Left cardiac atrium (tissue), 4 donors: ENCODE measurements at regions of chr1 and their contacts with region 1.

Region 1: DNA sequence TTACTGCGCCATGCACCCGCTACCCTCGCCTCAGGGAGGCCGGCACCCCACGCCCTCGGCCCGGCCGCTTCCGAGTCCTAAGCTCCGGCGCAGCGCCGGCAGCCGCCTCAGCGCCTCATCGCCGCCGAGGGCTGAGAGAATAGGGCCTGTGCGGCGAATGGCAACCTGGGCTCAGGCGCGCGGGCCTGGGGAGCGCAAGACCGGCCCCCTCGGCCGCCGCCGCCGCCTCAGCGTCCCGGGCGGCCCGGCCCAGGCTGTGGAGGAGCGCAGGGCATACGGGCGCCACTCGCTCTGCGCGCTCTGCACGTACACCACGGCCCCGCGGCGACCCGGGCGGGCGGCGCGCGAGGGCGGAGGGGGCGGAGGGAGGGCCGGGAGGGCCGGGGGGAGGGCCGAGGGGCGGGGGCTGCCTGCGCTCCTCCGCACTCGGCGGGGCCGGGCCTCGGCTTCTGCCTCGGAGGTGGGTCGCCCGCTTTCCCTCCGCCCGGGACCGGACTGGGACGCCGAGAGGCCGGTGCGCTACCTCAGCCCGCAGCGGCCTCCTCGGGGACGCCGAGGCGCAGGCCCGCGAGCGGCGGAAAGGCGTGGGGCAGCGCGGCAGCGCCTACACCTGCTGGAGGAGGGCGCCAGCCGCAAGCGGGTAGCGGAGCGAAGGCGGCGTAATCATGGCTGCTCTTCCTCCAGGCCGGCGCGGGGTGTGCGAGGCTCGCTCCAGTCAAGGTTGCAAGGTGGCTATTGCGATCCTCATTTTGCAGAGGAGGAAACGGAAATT is at the start of gene EGLN1:
- DNase-seq: peak; percentile 90
- ATAC-seq: peak; percentile 94 to 95
- total RNA-seq, gene EGLN1: 53.6 to 85.0 TPM

Region 2: GRCh38 chr1:231369282-231369681 is 52.9 kb before region 1 on chr1:
- intact Hi-C with region 1: loop called in 1 of 2 experiments (anchors 10 kb)
- DNase-seq: no peak
- ATAC-seq: no peak

Region 3: DNA sequence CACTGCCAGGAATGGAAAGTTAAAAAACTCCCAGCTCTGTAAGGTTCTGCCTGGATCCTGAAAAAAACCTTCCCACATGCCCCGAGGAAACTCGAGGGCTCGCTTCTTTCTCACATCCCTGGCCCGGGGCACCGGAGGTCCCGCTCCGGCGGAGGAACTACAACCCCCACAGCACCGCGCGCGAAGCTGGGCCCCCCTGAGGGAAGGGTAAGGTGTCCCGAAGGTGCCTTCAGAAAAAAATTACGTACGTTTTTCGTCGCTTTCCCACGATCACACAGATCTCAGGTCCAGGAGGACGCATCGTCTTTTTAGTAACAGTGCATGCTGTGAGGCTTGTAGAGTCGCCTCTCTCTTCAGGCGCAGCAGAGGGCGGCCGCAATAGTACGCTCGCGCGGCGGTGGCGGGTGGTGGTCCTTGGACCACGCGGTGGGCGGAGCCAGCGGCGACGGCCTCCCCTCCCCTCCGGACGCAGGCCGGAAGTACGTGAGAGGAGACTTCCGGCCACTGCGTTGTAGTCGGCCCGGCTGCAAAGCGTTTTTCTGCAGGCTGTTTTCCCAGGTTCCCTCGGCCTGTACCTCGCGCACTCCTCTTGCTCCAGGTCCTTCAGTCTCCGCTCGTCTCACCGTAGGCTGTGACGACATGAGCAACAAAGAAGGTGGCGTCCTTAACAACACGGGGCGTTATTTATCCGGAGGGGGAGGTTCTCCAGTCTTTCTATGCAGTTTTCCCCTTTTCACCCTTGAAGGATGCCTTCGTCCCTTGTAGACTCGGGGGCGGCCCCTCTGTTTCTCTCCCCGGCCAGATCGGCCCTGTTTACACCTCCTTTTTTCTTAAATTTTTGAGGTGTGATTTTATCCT is 106.2 kb after region 1 on chr1 and contains the start of gene TSNAX:
- intact Hi-C with region 1: loop called in 1 of 2 experiments (anchors 5 kb)
- DNase-seq: peak; percentile 94
- ATAC-seq: peak; percentile 99 to 100
- total RNA-seq, gene TSNAX: 27.8 to 44.0 TPM